Dendritic cell treated with granulocyte-macrophage colony-stimulating factor and Interleukin-4, amounts not matched to agents 40 ng/mL and 50 ng/mL, for 4 days (primary cell): ENCODE measurements at regions of chr3 and their contacts with region 1.

Region 1: GRCh38 chr3:44338010-44338827 is at the start of gene TCAIM:
- H3K4me3 Mint-ChIP-seq: peak within 1 kb of the TSS; percentile 85
- H3K27ac Mint-ChIP-seq: peak within 1 kb of the TSS; percentile 98
- H3K4me1 Mint-ChIP-seq: peaks cover 31% of the 10 kb centered on the region
- H3K27me3 Mint-ChIP-seq: no peaks in the 10 kb centered on the region

Region 2: DNA sequence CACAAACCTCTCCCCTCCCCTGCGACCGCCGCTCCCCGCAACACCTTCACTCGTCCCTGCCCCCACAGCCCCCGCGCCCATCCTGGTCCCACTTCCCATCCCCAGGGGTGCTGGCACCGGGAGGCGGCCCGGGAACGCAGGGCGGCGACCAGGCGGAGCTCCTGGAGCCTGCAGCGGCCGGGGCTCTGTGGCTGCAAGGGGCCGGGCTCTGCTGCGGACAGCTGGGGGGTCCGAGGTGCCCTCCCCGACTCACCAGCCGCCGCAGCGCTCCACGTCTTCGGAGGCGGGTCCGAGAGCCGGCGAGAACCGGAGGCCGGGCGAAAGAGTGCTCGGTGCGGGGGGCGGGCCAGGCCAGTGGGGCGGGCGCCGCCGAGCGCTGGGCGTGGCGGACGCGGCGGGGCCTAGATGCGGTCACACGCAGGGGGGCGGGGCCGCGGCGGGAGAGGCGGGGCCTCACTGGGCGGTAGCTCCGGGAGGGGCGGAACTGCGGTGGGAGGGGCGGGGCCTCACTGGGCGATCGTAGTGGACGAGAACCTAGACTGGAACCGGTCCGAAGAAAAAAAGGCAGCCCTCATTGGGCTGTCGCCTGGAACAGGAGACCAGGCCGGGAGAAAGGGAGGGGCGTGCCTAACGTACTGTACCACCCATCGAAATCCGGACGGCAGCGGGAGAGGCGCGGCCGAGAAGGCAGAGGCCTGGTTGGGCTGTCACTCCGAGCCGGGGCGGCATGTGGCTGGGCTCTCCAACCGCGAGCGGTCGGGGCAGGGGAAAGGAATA is 716.4 kb before region 1 on chr3 and contains the start of gene ANO10:
- intact Hi-C with region 1: loop called (anchors 5 kb)
- H3K4me3 Mint-ChIP-seq: peak within 1 kb of the TSS; percentile 97
- H3K27ac Mint-ChIP-seq: peak within 1 kb of the TSS; percentile 86
- H3K4me1 Mint-ChIP-seq: peaks cover 33% of the 10 kb centered on the region
- H3K27me3 Mint-ChIP-seq: peaks cover 5% of the 10 kb centered on the region

Region 3: GRCh38 chr3:44146073-44146472 is 192.1 kb before region 1 on chr3:
- intact Hi-C with region 1: no loop called
- H3K4me3 Mint-ChIP-seq: no peak overlapping the region
- H3K27ac Mint-ChIP-seq: no peak overlapping the region
- H3K4me1 Mint-ChIP-seq: no peaks in the 10 kb centered on the region
- H3K27me3 Mint-ChIP-seq: peaks cover 16% of the 10 kb centered on the region

Region 4: GRCh38 chr3:44439499-44440295 is 101.5 kb after region 1 on chr3:
- intact Hi-C with region 1: loop called (anchors 1 kb)
- H3K4me3 Mint-ChIP-seq: peak overlapping the region; percentile 25
- H3K27ac Mint-ChIP-seq: peak overlapping the region; percentile 82
- H3K4me1 Mint-ChIP-seq: peaks cover 44% of the 10 kb centered on the region
- H3K27me3 Mint-ChIP-seq: peaks cover 2% of the 10 kb centered on the region

Region 5: DNA sequence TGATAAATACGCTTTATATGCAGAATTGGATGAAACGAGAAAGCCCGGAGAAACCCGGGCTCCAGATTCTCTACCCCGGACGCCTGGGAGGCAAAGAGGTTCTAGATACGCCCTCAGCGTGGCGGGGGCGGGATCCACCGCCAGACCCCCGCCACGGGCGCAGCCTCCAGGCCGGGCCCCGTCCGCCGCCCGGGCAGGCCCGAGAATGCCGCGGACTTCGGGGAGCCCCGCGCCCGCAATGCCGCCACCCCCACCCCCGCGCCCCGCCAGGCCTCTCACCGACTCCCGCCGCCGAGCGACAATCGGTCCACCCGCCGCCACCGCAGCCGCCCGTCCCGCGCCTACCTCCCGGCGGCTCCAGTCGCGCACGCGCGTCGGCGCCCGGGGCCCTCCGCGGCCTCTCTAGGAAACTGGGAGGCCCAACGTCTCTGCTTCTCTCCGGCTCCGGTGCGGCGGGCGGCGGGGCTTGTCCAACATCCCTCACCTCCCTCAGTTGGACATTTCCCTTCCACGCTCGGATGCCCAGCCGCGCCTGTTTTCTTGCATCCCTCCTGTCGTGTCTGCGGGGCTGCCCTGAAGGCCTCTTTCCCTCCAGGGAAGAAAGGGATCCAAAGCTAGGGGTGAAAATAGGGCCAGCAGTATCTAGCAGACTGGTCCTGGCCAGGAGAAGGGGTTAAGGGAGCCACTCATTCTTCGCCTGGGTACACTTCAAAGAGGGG is 139.3 kb after region 1 on chr3 and contains the start of gene ZNF445:
- intact Hi-C with region 1: loop called (anchors 1 kb)
- H3K4me3 Mint-ChIP-seq: peak within 1 kb of the TSS; percentile 81
- H3K27ac Mint-ChIP-seq: peak within 1 kb of the TSS; percentile 66
- H3K4me1 Mint-ChIP-seq: peaks cover 11% of the 10 kb centered on the region
- H3K27me3 Mint-ChIP-seq: no peaks in the 10 kb centered on the region

Region 6: GRCh38 chr3:44510000-44510368 is 171.8 kb after region 1 on chr3:
- intact Hi-C with region 1: loop called (anchors 5 kb)
- H3K4me3 Mint-ChIP-seq: peak overlapping the region; percentile 91
- H3K27ac Mint-ChIP-seq: peak overlapping the region; percentile 97
- H3K4me1 Mint-ChIP-seq: peaks cover 26% of the 10 kb centered on the region
- H3K27me3 Mint-ChIP-seq: peaks cover 3% of the 10 kb centered on the region

Region 7: DNA sequence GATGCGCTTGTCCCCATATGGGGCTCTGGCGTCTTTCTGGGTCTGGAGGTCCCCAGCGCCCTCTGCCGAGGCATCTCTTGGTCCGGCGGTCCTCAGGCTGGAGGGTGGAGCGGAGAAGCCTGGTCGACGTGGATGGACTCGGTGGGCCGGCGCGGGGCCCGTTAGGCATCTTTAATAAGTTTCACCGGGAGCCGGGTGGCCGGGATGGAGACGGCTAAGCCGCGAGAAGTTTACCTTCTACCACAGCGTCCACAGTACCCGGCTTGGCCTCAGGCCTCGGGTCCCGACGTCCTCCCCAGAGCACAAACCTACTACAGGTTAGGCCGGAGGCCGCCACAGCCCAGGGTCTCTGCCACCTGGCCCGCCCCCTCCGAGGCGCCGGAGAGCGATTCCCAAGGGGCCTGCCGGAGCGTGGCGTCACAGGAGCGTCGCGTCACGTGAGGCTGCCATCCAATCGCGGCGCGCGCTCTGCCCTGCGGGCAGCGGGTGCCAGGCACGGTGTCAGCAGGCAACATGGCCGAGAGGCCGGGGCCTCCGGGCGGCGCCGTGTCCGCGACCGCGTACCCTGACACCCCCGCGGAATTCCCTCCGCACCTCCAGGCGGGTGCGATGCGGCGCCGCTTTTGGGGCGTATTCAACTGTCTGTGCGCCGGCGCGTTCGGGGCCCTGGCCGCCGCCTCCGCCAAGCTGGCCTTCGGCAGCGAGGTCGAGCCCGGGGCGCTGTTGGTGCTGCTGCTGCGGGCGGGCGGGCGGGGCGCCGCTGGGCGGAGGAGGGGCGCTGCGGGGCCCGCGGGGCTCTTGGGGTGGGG is 523.4 kb after region 1 on chr3 and contains the start of gene TMEM42:
- intact Hi-C with region 1: loop called (anchors 5 kb)
- H3K4me3 Mint-ChIP-seq: peak within 1 kb of the TSS; percentile 83
- H3K27ac Mint-ChIP-seq: peak within 1 kb of the TSS; percentile 82
- H3K4me1 Mint-ChIP-seq: peaks cover 10% of the 10 kb centered on the region
- H3K27me3 Mint-ChIP-seq: no peaks in the 10 kb centered on the region